Activated CD4-positive, alpha-beta T cell treated with anti-CD3 and anti-CD28 coated beads, Interleukin-2, amount 10 ng/mL, durations not matched to agents 24 days and 14 days (primary cell): ENCODE measurements at regions of chr11 and their contacts with region 1.

Region 1: DNA sequence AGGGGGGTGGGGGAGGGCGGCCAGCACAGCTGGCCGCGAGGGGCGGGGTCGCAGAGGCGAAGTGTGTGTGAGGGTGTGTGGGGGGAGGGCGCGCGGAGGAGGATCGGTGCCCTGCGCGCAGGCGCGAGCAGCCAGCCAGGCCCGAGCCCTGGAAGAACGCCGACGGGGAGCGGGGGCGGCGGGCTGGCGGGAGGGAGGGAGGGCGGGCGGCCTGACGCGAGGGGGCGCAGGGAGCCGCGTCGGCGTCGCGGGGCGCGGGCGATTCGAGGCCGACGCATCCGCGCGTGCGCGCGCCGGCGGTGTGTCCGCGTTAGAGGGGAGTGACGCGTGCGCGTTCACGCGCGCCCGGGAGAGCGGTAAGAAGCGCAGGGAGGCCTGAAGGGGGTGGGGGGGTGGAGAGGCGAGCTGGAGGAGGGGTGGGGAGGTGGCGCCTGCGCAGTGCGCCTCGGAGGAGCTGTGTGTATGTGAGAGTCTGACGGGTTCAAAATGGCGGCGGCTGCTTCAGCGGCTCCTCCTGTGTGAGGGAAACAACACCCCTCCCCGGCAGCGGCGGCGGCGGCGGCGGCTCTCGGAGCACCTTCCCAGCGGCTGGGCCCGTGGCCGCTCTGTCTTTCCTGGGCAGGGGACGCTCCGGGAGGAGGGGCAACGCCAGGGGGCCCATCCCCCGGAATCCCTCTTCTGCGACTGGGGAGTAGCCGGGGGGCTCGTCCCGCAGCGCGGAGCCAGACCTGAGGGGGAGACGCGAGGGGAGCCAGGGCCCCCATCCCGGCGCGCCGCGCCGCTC is at the start of gene KDM2A:
- DNase-seq: peak; percentile 99
- H3K4me3 Mint-ChIP-seq: peak within 1 kb of the TSS; percentile 100
- H3K27ac Mint-ChIP-seq: peak within 1 kb of the TSS; percentile 97
- H3K4me1 Mint-ChIP-seq: peaks cover 25% of the 10 kb centered on the region
- H3K27me3 Mint-ChIP-seq: peaks cover 6% of the 10 kb centered on the region
- total RNA-seq, gene KDM2A: 102 and 103 TPM in 2 replicates

Region 2: DNA sequence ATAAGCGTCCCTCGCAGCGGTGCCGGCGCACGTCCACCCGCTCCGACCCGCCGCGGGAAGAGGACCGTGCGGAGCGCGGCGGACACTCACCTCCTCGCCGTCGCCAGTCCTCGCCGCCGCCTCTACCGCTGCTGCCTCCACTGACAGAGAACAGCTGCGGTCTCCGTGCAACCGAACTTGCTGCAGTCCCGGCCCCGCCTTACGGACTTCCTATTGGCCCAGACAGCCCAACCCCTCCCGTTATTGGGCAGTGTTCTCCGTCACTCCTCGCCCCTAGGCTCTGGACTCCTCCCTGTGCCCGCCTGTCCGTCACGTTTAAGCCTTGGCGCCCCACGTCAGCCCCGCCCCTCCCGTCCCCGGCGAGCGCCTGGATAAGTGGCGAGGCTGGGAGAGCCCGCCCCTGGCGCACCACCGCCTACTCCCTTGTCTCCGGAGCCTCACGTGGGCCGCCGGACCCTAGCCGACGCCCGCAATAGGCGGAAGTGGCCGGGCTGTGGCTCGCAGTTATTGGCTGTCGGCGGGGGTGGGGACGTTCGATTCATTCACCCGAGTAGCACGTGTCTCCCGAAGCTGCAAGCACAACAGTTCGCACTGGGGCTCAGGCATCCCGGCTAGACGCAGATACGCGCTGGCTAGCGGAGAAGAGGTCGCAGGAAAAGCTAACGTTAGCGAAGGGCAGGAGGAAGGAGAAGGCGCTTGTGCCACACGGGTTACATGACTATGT is 160.6 kb before region 1 on chr11 and contains the start of gene PC:
- intact Hi-C with region 1: loop called (anchors 10 kb)
- DNase-seq: peak; percentile 99
- H3K4me3 Mint-ChIP-seq: peak within 1 kb of the TSS; percentile 85
- H3K27ac Mint-ChIP-seq: peak within 1 kb of the TSS; percentile 94
- H3K4me1 Mint-ChIP-seq: peaks cover 20% of the 10 kb centered on the region
- H3K27me3 Mint-ChIP-seq: no peaks in the 10 kb centered on the region
- total RNA-seq, gene PC: 13.1 and 15.7 TPM in 2 replicates

Region 3: GRCh38 chr11:67160874-67161783 is 42.1 kb after region 1 on chr11:
- intact Hi-C with region 1: loop called (anchors 5 kb)
- DNase-seq: no peak
- H3K4me3 Mint-ChIP-seq: no peak overlapping the region
- H3K27ac Mint-ChIP-seq: peak overlapping the region; percentile 29
- H3K4me1 Mint-ChIP-seq: peaks cover 24% of the 10 kb centered on the region
- H3K27me3 Mint-ChIP-seq: no peaks in the 10 kb centered on the region

Region 4: DNA sequence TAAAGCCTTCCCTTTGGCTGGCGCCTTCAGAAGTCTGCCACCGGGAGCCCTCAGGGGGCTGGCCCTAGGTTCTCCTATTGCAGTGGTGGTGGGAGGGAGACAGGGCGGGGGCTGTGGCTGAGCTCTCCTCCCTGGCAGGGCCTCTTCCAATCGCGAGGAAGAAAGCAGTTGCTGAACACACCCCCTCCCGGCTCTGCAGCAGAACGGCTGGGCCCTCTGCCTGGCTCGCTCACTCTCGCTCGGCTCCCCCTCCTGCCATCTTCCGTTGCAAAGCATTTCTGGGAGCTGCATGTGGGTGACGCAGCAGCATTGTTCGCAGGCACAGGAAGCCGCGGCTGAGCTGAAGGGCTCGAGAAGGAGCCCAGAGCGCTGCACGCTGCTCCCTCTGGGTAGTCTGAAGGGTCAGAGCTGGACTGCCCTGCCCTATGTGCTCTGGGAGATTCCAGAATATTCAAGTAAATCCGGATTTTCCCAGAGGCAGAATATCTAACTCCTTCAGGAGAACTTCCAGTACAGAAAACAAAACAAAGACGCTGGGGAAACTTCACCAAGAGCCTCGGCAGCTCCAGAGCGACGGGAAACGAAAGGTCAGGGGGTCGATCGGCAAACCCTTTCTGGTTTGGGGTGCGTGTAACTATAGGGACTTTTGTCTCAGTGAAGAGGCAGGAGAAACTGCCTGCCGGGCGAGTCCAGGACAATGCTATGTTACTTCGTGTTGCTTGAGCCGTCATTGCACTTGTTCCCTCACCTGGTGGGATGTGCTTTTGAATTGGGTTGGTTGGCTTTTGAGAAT is 121.0 kb after region 1 on chr11:
- intact Hi-C with region 1: loop called (anchors 1 kb)
- DNase-seq: peak; percentile 98
- H3K4me3 Mint-ChIP-seq: peak overlapping the region; percentile 100
- H3K27ac Mint-ChIP-seq: peak overlapping the region; percentile 98
- H3K4me1 Mint-ChIP-seq: peaks cover 43% of the 10 kb centered on the region
- H3K27me3 Mint-ChIP-seq: no peaks in the 10 kb centered on the region

Region 5: GRCh38 chr11:67545280-67545679 is 426.3 kb after region 1 on chr11:
- intact Hi-C with region 1: no loop called
- DNase-seq: no peak
- H3K4me3 Mint-ChIP-seq: no peak overlapping the region
- H3K27ac Mint-ChIP-seq: no peak overlapping the region
- H3K4me1 Mint-ChIP-seq: no peaks in the 10 kb centered on the region
- H3K27me3 Mint-ChIP-seq: peaks cover 2% of the 10 kb centered on the region